ENCODE measurements at regions of chr1 and their contacts with region 1.

Region 1: DNA sequence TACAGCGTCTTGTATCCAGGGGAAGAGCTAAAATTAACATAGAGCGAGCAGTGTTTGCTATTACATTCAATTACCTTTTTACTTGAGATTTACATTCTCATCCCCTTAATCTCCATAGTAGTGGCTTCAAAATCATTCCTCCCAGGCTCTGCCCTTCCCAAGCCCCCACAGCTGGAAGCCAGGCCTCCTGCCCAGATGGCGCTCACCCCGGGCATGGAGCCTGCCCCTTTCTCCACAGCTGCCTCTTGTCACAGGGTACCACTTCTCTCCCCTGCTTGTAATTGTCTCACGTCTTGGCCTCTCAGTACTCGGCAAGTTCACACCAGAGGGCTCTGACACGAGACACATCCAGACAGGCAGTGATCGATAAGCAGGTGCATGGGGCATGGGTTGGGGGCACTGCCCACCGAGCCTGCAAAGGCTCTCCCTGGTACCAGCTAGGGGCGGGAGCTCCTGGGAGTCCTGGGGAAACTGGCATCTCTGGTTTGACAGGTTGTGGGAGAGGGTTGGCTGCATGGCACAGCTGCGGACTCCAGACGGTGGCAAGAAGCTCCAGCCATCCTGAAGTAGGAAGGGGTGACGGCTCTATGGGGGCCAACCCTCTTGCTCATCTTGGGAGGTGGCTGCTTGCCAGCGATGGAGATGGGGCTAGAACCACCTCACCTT is 20.1 kb downstream of the CASZ1 start:
- DNase-seq: no peak
- H3K4me3 ChIP-seq: no peak overlapping the region
- H3K27ac ChIP-seq: no peak overlapping the region
- H3K4me1 ChIP-seq: peaks cover 0 to 7% (median 0%) of the 10 kb centered on the region in 4 experiments; a peak in 2 of 7 replicates
- H3K27me3 ChIP-seq: no peaks in the 10 kb centered on the region
- CTCF ChIP-seq: no peak
- EP300 ChIP-seq: no peak
- POLR2A ChIP-seq: no peak
- RAD21 ChIP-seq: no peak

Region 2: GRCh38 chr1:10740123-10740522 is 36.2 kb before region 1 on chr1:
- CTCF ChIA-PET with region 1: no interaction called
- POLR2A ChIA-PET with region 1: no interaction called
- DNase-seq: no peak
- H3K4me3 ChIP-seq: no peak overlapping the region
- H3K27ac ChIP-seq: no peak overlapping the region
- H3K4me1 ChIP-seq: peaks cover 0 to 22% (median 12%) of the 10 kb centered on the region in 4 experiments; a peak in 6 of 7 replicates
- H3K27me3 ChIP-seq: no peaks in the 10 kb centered on the region
- CTCF ChIP-seq: no peak
- EP300 ChIP-seq: no peak
- POLR2A ChIP-seq: no peak
- RAD21 ChIP-seq: no peak

Region 3: GRCh38 chr1:10788592-10789006 is 12.3 kb after region 1 on chr1:
- CTCF ChIA-PET with region 1: interaction called, 15 read pairs
- POLR2A ChIA-PET with region 1: interaction called, 6 read pairs
- DNase-seq: peak in 1 of 2 experiments; percentile 64
- H3K4me3 ChIP-seq: no peak overlapping the region
- H3K27ac ChIP-seq: no peak overlapping the region
- H3K4me1 ChIP-seq: peaks cover 0 to 6% (median 3%) of the 10 kb centered on the region in 4 experiments; a peak in 6 of 7 replicates
- H3K27me3 ChIP-seq: peaks cover 0 to 7% (median 1%) of the 10 kb centered on the region in 4 experiments; a peak in 3 of 7 replicates
- CTCF ChIP-seq: peak; percentile 46 to 59 (median 53)
- EP300 ChIP-seq: no peak
- POLR2A ChIP-seq: no peak
- RAD21 ChIP-seq: peak; percentile 41 to 60

Measured in H1 (cell line).